ENCODE measurements at regions of chr6 and their contacts with region 1.

Region 1: GRCh38 chr6:139482287-139482686 is 107.8 kb upstream of the CITED2 start:
- DNase-seq: no peak
- ATAC-seq: no peak
- H3K4me3 ChIP-seq: no peak overlapping the region
- H3K27ac ChIP-seq: no peak overlapping the region
- H3K4me1 ChIP-seq: peaks cover 60% of the 10 kb centered on the region
- H3K27me3 ChIP-seq: no peaks in the 10 kb centered on the region
- CTCF ChIP-seq: no peak
- EP300 ChIP-seq: no peak
- POLR2A ChIP-seq: no peak
- RAD21 ChIP-seq: no peak

Region 2: GRCh38 chr6:139508023-139508422 is 25.7 kb after region 1 on chr6:
- CTCF ChIA-PET with region 1: no interaction called
- POLR2A ChIA-PET with region 1: no interaction called
- in situ Hi-C with region 1: no loop called
- intact Hi-C with region 1: loop called (anchors 1 kb)
- DNase-seq: peak; percentile 23
- ATAC-seq: peak; percentile 40
- H3K4me3 ChIP-seq: no peak overlapping the region
- H3K27ac ChIP-seq: peak overlapping the region; percentile 28
- H3K4me1 ChIP-seq: peaks cover 42% of the 10 kb centered on the region
- H3K27me3 ChIP-seq: no peaks in the 10 kb centered on the region
- CTCF ChIP-seq: no peak
- EP300 ChIP-seq: no peak
- POLR2A ChIP-seq: no peak
- RAD21 ChIP-seq: no peak

Region 3: GRCh38 chr6:139588076-139588639 is 105.9 kb after region 1 on chr6:
- CTCF ChIA-PET with region 1: no interaction called
- POLR2A ChIA-PET with region 1: no interaction called
- in situ Hi-C with region 1: no loop called
- intact Hi-C with region 1: loop called (anchors 2 kb)
- DNase-seq: peak; percentile 30
- ATAC-seq: peak; percentile 74
- H3K4me3 ChIP-seq: peak overlapping the region in 2 of 3 experiments; percentile 11 to 14; a peak in 2 of 6 replicates
- H3K27ac ChIP-seq: peak overlapping the region; percentile 24
- H3K4me1 ChIP-seq: peaks cover 65% of the 10 kb centered on the region
- H3K27me3 ChIP-seq: no peaks in the 10 kb centered on the region
- CTCF ChIP-seq: no peak
- EP300 ChIP-seq: no peak
- POLR2A ChIP-seq: no peak
- RAD21 ChIP-seq: no peak

Region 4: DNA sequence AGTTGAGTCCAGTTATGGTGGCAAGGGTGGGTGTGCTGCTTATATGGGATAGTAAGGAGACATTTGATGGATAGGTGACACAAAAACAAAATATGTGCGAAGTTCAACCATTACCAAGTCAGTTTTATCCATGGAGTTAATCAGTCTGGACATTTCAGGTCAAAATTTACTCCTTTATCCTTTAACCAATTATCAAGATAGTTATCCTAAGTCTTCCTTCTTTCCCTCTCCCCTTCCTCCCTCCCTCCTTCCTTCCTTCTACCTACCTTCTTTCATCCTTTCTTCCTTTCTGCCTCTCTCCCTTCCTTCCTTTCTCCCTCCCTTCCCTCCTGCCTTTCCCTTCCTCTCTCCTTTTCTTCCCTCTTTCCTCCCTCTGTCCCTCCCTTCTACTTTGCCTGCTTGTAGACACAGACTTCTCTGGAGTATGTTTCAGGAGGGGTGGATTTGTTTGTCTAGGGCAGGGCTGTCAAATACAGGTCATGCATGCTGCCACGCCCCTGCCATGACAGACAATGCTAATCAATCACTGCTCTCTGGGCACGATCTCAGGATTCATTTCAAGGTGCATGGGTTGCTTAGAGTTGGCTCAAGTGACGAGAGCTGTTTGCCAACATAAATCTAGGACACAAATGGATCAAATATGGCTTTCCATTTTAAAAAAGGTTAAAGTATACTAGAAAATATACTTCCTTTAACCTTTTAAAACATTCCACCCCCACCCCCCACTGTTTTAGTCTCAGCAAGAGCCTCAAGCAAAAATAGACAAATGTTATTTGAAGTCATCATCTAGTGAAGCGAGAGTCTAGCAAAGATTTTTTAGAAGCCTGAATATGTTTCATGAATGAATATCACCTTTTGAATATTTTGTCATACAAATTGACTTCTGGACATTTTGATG is 173.8 kb after region 1 on chr6:
- CTCF ChIA-PET with region 1: no interaction called
- POLR2A ChIA-PET with region 1: no interaction called
- in situ Hi-C with region 1: no loop called
- intact Hi-C with region 1: loop called (anchors 5 kb)
- DNase-seq: peak; percentile 14
- ATAC-seq: peak; percentile 27; the same call in 2 of the 3 replicates
- H3K4me3 ChIP-seq: no peak overlapping the region
- H3K27ac ChIP-seq: no peak overlapping the region
- H3K4me1 ChIP-seq: peaks cover 31% of the 10 kb centered on the region
- H3K27me3 ChIP-seq: no peaks in the 10 kb centered on the region
- CTCF ChIP-seq: no peak
- EP300 ChIP-seq: no peak
- POLR2A ChIP-seq: no peak
- RAD21 ChIP-seq: no peak

Measured in HepG2 (cell line).